ENCODE measurements at regions of chr11 and their contacts with region 1.

Region 1: DNA sequence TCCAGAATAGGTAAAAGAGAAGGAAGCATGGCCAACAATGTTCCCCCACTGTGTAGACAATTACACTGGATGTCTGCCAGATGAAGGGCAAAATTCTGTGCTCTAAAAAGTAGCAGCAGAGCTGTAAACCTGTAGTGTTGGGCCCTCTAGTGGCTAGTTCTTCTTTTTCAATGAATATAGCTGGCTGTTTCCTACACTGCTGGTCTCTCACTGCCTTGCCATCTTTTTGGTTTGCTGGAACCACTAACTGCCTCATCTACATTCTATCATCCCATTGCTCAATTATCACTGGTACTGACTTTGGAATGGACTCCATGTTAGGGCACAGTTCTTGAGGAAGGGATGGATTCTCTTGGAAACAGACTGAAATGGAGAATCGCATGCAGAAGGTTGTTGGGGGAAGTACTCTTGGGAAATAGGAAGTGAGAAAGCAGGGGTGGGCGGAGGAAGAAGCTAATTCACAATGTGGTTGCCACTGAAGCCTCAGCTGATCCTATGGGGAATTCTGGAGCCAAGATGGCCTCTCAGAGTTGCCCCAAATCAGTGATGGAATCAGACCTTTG is 17.9 kb downstream of the KCNE3 start:
- DNase-seq: peak; percentile 68 to 74
- ATAC-seq: peak; percentile 81 to 94
- H3K4me3 ChIP-seq: no peak overlapping the region
- H3K27ac ChIP-seq: peak overlapping the region; percentile 53 to 60; a peak in 5 of 6 replicates
- H3K4me1 ChIP-seq: peaks cover 12% of the 10 kb centered on the region
- CTCF ChIP-seq: peak; percentile 94
- EP300 ChIP-seq: no peak
- POLR2A ChIP-seq: no peak
- RAD21 ChIP-seq: peak; percentile 96 to 97

Region 2: DNA sequence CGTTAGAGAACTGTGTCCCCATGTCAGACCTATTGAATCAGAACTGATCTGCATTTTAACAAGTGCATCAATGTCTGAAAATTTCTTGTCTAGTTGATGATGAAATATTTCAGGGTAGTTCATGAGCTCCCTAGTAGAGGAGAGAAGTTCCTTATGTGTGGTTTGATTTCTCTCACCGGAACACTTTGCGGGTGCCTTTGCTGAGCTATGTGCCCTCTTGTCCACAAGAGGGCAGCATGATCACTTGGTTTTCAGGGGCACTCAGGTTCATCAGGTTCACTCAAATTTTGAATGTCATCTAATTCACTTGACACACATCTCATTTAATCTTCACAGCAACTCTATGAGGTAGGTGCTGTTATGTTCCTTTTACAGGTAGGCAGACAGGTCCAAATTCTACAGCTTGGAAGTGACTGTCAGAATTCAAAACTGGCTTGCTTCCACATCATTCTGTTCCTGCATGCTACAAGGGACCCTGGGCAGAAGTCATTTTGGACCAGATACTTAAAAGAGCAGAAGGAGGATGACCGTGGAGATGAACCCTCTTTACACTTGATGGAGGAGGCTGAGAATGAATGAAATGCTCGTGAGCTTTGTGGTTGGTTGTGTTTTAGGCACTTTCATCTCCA is 193.6 kb before region 1 on chr11:
- CTCF ChIA-PET with region 1: interaction called, 331 read pairs
- POLR2A ChIA-PET with region 1: interaction called, 6 read pairs
- DNase-seq: peak; percentile 73 to 74
- ATAC-seq: peak; percentile 60 to 66; a peak in 4 of 6 replicates
- H3K4me3 ChIP-seq: no peak overlapping the region
- H3K27ac ChIP-seq: peak overlapping the region; percentile 69 to 83
- H3K4me1 ChIP-seq: peaks cover 53% of the 10 kb centered on the region
- CTCF ChIP-seq: peak; percentile 96
- EP300 ChIP-seq: no peak
- POLR2A ChIP-seq: no peak
- RAD21 ChIP-seq: peak; percentile 97

Region 3: DNA sequence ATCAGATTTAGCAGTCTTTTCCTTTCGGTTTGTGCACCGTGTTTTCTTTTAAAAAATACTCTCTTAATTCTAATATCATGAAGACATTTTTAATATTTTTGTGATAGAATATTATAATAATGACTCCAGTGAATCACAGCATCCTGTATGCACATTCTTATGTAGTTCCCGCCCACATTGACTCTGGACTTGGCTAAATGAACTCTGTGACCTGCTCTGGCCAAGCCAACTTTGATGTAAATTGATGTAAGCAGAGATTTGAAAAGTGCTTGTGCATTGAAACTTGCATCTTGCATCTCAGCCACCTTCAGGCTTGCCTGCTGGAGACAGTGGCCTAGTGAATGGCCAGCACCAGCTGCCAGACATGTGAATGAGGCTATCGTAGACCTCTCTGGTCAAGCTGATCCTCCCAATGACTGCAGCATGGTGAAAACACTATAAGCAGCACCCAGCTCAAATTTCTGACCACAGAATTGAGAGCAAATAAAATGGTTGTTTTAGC is 22.0 kb before region 1 on chr11:
- CTCF ChIA-PET with region 1: interaction called, 73 read pairs
- POLR2A ChIA-PET with region 1: no interaction called
- DNase-seq: peak in 1 of 2 experiments; percentile 14
- ATAC-seq: no peak
- H3K4me3 ChIP-seq: no peak overlapping the region
- H3K27ac ChIP-seq: no peak overlapping the region
- H3K4me1 ChIP-seq: no peaks in the 10 kb centered on the region
- CTCF ChIP-seq: no peak
- EP300 ChIP-seq: no peak
- POLR2A ChIP-seq: no peak
- RAD21 ChIP-seq: no peak

Region 4: GRCh38 chr11:74470526-74470925 is 21.1 kb after region 1 on chr11:
- CTCF ChIA-PET with region 1: interaction called, 23 read pairs
- POLR2A ChIA-PET with region 1: no interaction called
- DNase-seq: no peak
- ATAC-seq: no peak
- H3K4me3 ChIP-seq: no peak overlapping the region
- H3K27ac ChIP-seq: no peak overlapping the region
- H3K4me1 ChIP-seq: peaks cover 4% of the 10 kb centered on the region; the same call in 2 of the 3 replicates
- CTCF ChIP-seq: no peak
- EP300 ChIP-seq: no peak
- POLR2A ChIP-seq: no peak
- RAD21 ChIP-seq: no peak

Region 5: DNA sequence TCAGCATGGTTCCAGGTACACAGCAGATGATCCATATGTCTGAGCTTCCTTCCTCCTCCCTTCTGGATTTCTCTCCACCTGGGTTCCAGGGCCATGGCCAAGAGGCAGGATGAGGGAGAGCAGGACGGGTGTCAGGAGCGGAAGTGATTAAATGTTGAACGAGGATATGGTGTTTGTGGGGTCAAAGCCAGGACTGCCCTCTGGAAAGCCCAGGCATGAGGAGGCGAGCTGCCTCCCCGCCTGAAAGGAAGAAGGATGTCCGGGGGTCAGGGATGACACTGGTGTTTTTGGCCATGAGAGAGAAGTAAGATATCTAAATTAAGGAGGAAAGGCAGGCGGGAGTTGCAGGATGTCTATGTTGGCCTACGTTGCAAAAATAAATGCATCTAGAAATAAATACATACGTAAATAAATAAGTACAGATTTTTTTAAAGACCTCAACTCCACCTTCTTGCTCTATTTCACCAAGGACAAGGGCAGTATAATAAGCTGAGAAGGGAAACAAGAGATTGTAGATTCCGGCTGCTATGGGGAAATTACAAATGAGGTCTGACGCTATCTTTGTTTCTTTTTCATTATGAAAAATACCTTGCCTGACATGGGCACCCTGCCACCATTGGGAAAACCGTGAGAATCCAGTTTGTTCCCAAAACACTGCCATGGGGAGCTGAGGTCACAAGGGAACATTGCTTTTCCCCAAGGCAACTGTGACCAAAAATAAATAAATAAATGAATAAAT is 71.6 kb after region 1 on chr11:
- CTCF ChIA-PET with region 1: interaction called, 18 read pairs
- POLR2A ChIA-PET with region 1: no interaction called
- DNase-seq: no peak
- ATAC-seq: no peak
- H3K4me3 ChIP-seq: no peak overlapping the region
- H3K27ac ChIP-seq: no peak overlapping the region
- H3K4me1 ChIP-seq: no peaks in the 10 kb centered on the region
- CTCF ChIP-seq: no peak
- EP300 ChIP-seq: no peak
- POLR2A ChIP-seq: no peak
- RAD21 ChIP-seq: no peak

Region 6: GRCh38 chr11:74739546-74740270 is 290.3 kb after region 1 on chr11:
- CTCF ChIA-PET with region 1: interaction called, 31 read pairs
- POLR2A ChIA-PET with region 1: no interaction called
- DNase-seq: peak; percentile 74 to 87
- ATAC-seq: peak; percentile 96 to 97
- H3K4me3 ChIP-seq: no peak overlapping the region
- H3K27ac ChIP-seq: peak overlapping the region in 1 of 2 experiments; percentile 16; a peak in 1 of 6 replicates
- H3K4me1 ChIP-seq: 0 out of 3 replicates have a peak, but pooled peaks cover 4% of the 10 kb centered on the region
- CTCF ChIP-seq: peak; percentile 94
- EP300 ChIP-seq: no peak
- POLR2A ChIP-seq: no peak
- RAD21 ChIP-seq: peak; percentile 86 to 88